Right ventricle myocardium superior (tissue), 1 donor: ENCODE measurements at regions of chr20 and their contacts with region 1.

Region 1: DNA sequence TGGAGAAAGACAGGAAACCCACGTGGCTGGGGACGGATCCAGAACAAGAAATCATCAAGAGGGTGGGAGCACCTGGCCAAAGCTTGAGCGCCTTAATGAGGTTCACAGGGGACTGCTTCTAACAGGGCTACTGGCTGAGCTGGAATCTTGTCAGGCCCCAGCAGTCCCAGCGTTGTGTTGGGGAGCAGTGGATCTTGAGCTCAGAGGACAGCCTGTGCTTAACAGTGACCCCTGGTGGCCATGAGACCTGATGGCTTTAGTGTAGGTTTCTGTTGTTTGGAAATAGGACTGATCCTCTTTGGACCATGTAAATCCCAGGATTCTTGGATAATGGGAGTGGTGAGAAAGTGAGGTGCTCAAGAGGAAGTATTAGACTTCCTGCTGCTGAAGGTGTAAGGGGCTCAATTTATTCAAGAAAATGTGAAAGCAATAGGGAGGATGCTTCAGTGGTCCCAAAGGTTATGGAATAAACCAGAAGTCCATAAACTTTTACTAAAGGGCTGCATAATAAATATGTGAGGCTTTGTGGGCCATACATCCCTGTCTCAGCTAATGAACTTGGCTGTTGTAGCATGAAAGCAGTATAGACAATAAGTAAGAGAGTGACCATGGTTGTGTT is 216.2 kb downstream of the NFATC2 start:
- DNase-seq: peak; percentile 62
- ATAC-seq: peak; percentile 65

Region 2: DNA sequence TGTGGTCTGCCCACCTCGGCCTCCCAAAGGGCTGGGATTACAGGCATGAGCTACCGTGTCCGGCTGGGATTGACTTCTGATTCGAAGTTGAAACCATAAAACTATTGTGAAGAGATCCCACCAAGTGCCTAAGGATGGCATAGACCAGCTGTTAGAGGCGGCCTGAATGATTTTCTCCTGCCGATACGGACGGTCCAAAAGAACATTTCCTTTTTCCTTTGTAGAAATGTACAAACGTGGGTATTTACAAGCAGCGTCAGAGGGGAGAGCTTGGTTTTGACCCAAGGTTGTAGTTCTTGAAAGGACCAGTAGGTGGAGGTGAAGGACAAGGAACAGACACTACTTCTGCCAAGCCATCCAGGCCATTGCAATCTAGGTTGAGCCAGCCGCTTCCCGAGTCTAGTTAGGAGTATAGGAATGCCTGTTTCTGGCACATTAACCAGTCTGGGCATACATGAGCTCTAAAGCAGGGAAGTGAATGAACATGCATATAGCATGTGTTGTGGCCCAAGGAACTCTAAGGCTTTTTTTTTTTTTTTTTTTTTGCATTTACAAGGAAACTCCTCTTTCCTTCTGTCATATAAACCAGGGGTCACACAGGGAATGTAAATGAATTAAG is 338.6 kb before region 1 on chr20:
- intact Hi-C with region 1: loop called (anchors 5 kb)
- DNase-seq: no peak
- ATAC-seq: peak; percentile 96

Region 3: GRCh38 chr20:51176876-51177275 is 149.4 kb before region 1 on chr20:
- intact Hi-C with region 1: no loop called
- DNase-seq: no peak
- ATAC-seq: no peak

Region 4: DNA sequence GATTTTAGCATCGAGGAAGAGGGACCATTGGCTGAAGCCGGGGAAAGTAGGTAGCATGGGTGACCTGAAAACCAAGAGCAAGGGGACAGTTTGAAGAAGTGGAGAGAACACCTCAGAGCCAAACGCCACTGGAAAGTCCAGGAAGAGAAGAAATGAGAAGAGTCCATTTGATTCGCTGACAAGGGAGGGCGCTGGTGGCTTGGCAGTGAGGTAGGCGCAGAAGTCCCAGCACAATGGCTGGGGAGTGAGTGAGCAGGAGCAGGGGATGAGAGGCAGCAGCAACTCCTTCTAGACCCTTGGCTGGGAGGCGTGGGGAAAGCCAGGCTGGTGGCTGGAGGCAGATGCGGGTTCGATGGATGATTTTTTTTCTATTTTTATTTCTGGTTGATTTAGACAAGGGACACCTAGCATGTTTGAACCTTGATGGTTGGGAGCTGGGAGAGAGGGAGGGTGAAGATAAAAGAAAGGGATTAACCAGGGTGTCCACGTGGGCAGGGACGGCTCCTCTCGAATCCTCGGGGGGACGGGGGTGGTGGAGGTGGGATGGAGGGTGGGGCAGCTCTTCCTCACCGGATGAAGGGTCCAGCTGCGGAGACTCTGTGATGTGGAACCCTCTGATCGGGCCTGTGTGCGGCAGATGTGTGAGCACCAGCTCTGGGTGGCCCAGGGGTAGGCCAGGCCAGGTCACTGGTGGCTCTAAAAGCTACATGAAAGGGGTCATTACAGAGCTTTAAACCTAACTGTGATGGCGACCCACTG is 52.0 kb after region 1 on chr20:
- intact Hi-C with region 1: no loop called
- DNase-seq: no peak
- ATAC-seq: no peak

Region 5: DNA sequence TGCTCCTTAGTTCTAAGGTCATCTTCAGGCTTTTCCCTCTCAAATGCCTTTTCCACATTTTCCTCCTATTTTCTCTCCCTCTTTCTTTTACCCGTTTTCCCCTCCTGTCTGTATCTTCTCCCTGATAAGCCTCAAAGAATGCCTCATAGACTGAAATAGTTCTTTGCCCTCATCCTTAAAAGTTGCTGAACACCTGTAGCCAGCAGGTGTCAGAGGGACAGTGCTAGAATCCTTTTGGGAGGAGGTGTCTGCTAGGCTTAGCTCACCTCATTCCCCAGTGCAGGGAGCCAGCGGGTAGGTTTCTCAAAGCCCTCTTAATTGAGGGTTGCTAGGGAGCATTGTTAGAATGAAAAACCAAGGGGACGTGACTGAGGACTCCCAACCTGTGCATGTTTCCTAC is 1849.8 kb after region 1 on chr20:
- intact Hi-C with region 1: no loop called
- DNase-seq: no peak
- ATAC-seq: no peak